ENCODE measurements at regions of chr6 and their contacts with region 1.

Region 1: DNA sequence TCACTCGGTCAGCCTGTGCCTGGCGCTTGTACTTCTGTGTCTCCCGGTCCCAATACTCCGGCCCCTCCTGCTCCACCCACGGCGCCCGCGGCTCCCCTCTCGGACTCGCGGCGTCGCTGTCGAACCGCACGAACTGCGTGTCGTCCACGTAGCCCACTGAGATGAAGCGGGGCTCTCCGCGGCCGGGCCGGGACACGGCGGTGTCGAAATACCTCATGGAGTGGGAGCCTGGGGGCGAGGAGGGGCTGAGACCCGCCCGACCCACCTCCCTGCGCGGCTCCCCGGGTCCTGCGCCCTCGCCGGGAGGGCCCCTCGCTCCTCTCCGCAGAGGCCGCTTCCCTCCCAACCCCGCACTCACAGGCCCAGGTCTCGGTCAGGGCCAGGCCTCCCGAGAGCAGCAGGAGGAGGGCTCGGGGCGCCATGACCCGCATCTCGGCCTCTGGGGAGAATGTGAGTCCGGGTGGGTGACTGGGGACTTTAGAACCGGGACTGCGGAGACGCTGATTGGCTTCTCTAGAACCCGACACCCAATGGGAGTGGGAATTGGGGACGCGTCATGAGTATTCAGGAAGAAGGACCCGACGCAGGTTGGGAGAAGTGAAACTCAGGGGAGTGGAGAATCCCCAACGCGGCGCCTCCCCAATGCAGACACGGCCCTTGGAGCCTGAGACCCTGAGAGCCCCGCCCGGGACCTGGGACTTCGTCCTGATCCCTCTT is at the start of gene HLA-C:
- DNase-seq: peak; percentile 89
- ATAC-seq: peak; percentile 99
- total RNA-seq, gene HLA-C: 185 TPM

Region 2: GRCh38 chr6:31358302-31358701 is 86.5 kb after region 1 on chr6:
- intact Hi-C with region 1: loop called (anchors 2 kb)
- DNase-seq: no peak
- ATAC-seq: no peak